Heart left ventricle (tissue), 16 donors: ENCODE measurements at regions of chr3 and their contacts with region 1.

Region 1: DNA sequence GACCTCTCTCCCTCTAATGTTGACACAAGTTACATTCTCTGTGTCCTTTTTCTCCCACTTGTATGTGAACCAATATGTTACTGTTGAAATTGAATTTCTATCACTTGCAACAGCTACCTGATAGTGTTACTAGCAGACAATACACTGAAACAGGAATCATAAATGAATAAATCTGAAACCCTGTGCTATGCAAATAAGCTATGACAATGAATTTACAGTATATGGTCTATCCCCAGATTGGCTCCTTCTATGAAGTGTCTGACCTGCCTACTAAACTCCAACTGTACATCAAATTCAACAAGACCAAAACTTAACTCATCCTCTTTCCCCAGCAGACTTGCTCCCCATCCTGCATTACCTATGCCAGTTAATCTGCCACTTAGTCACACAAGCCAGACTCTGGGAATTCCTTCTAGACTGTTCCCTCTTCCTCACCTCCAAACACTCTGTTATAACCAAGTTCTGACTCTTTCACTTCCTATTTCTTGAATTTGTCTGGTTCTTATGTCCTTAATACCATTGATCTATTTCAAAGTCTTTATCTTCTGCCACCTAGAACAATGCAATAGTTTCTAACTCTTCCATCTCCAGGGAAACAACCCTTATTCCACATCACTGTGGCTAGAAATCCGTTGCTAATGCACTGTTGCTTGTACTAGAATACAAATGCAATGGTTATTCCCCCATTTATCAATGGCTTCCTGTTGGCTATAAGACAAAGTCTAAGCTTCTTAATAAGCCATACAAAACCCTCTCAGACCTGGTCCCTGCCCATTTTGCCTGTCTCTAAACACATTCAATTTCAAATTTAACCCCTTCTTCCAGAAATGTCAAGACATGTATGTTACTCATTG is 13.4 kb upstream of the ZNF639 start:
- DNase-seq: no peak
- ATAC-seq: no peak
- H3K4me3 ChIP-seq: no peak overlapping the region
- H3K27ac ChIP-seq: no peak overlapping the region
- H3K4me1 ChIP-seq: no peaks in the 10 kb centered on the region
- H3K27me3 ChIP-seq: peaks cover 0 to 4% (median 0%) of the 10 kb centered on the region in 9 donors
- CTCF ChIP-seq: no peak
- POLR2A ChIP-seq: no peak

Region 2: GRCh38 chr3:179037351-179037750 is 272.1 kb before region 1 on chr3:
- intact Hi-C with region 1: no loop called
- DNase-seq: peak; percentile 53 to 75 (median 73)
- ATAC-seq: peak; percentile 80 to 97 (median 96)
- H3K4me3 ChIP-seq: no peak overlapping the region
- H3K27ac ChIP-seq: peak overlapping the region in 4 of 12 donors; percentile 17 to 59 (median 36)
- H3K4me1 ChIP-seq: peaks cover 0 to 43% (median 13%) of the 10 kb centered on the region in 12 donors
- H3K27me3 ChIP-seq: no peaks in the 10 kb centered on the region
- CTCF ChIP-seq: no peak
- POLR2A ChIP-seq: no peak

Region 3: DNA sequence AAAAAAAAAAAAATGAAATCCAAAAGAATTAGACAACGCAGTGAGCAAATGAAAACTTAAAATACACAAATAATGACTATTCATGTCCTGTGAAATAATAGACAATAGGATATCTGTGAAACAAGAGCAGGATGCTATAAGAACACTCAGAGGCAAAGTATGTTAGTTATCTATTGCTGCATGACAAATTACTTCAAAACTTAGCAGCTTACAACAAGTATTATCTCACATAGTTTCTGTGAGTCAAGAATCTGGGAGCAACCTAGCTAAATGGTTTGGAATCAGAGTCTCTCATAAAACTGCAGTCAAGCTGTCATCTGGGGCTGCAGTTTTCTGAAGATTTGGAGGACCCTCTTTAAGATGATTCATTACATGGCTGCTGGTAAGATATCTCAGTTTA is 201.4 kb before region 1 on chr3:
- intact Hi-C with region 1: loop called in 2 of 10 experiments (anchors 2 kb)
- DNase-seq: no peak
- ATAC-seq: no peak
- H3K4me3 ChIP-seq: no peak overlapping the region
- H3K27ac ChIP-seq: no peak overlapping the region
- H3K4me1 ChIP-seq: no peaks in the 10 kb centered on the region
- H3K27me3 ChIP-seq: no peaks in the 10 kb centered on the region
- CTCF ChIP-seq: no peak
- POLR2A ChIP-seq: no peak

Region 4: DNA sequence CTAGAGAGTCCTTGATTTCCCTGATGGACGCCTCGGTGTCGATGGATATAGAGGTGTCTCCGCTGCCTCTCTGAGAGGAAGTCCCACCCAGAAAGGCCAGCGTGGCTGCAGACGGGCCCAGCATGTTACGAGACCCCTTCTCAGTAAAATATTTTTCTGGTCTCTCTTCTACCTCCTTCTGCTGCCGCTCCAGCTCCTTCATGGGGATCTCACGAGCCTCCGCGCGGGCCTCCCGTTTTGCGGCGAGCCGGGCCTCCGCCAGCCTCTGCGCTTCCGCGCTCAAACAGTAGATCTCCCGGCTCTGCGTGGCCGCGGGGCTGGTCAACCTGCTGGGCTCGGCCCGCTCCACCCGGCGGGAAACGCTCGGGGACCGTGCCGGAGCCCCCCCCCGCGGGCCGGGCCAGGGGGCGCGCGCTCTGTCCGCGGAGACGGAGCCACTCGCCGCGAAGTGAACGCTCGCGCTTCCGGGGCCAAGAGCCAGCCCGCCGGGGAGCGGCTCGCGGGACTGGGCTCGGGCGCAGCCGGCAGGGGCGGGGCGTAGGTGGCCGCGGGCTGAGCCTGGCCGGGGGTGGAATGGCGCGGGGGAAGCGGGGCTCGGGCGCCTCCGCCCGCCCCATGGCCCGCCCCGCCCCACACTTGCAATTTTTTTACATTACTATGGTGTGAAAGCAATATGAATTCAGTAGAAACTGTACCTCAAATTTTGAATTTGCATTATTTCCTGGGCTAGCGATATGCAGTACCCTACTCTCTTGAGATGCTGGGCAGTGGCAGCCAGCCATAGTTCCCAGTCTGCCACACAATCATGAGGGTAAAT is 48.3 kb before region 1 on chr3:
- intact Hi-C with region 1: loop called in 1 of 10 experiments (anchors 10 kb)
- DNase-seq: peak; percentile 76 to 92 (median 85)
- ATAC-seq: peak; percentile 86 to 100 (median 98)
- H3K4me3 ChIP-seq: peak overlapping the region; percentile 22 to 85 (median 72)
- H3K27ac ChIP-seq: peak overlapping the region in 11 of 12 donors; percentile 25 to 81 (median 70)
- H3K4me1 ChIP-seq: peaks cover 0 to 7% (median 0%) of the 10 kb centered on the region in 12 donors
- H3K27me3 ChIP-seq: no peaks in the 10 kb centered on the region
- CTCF ChIP-seq: no peak
- POLR2A ChIP-seq: peak in 1 of 2 donors; percentile 63

Region 5: DNA sequence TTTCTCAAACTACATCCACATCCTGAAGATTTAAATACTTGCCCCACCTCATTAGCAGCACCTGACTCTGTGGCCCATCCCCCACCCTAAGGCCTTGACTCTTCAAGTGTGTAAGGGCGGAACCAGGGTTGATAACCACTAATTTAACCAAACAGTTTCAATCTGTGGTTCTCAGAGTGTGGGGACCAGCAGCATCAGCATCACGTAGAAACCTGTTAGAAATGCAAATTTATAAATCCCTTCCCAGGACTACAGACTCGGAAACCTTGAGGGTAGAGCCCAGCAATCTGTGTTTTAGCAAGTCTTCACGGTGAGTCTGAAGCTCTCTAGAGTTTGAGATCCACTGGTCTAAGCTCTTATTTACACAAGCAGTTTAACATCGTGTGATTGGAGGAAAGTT is 129.4 kb after region 1 on chr3:
- intact Hi-C with region 1: no loop called
- DNase-seq: no peak
- ATAC-seq: no peak
- H3K4me3 ChIP-seq: no peak overlapping the region
- H3K27ac ChIP-seq: peak overlapping the region in 1 of 12 donors; percentile 5
- H3K4me1 ChIP-seq: peaks cover 0 to 54% (median 8%) of the 10 kb centered on the region in 12 donors
- H3K27me3 ChIP-seq: no peaks in the 10 kb centered on the region
- CTCF ChIP-seq: no peak
- POLR2A ChIP-seq: no peak